Activated CD4-positive, alpha-beta memory T cell treated with anti-CD3 and anti-CD28 coated beads, Interleukin-2, amount 10 ng/mL, durations not matched to agents 7 days and 5 days (primary cell): ENCODE measurements at regions of chr12 and their contacts with region 1.

Region 1: DNA sequence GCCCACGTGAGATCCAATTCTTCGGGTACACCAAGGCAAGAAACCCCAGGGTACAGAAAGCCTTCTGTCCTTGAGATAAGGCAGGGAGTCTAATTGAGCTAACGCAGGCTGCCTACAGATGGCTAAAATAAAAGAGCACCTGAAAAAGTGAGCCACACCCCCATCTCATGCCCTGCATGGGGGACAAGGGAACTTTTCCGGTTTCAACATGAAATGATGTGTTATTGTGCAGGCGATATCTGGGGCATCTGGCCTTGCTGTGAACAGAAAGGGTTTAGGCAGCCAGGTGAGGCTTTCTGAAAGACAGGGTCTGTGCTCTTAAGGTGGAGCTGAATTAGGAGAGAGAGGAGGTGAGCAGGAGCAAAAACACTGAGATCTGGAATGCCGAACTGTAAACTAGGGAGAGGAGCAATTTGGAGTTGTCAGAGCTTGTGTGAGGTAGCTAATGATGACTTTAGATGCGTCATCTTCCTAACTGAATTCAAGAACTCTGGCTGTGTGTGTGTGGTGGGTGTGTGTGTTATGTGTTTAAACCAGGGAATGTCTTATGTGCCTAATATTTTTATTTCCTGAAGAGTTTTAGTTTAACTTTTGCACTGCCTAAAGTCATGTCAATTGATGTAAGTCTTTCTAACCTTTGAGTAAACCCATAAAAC is 20.1 kb upstream of the LDHB start:
- DNase-seq: no peak
- H3K4me3 Mint-ChIP-seq: no peak overlapping the region
- H3K27ac Mint-ChIP-seq: no peak overlapping the region
- H3K4me1 Mint-ChIP-seq: peaks cover 34% of the 10 kb centered on the region
- H3K27me3 Mint-ChIP-seq: no peaks in the 10 kb centered on the region

Region 2: DNA sequence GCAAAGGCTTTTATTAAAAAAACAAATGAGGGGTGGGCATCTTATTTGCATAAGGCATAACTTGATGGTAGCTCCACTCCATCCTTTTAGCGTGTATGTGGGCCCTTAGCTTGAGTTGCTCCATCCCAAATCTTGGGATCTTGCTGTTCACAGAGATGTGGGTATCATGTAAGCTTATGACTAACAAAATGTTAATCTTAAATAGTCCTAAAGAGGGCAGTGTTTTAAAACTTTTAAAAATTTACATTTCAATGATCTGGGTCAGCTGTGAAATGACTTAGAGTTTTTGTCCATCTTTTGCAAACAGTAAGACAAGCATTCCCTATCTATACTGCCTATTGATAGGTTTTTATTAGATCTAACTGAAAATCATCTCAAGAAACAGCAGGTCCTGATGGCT is 429.1 kb before region 1 on chr12:
- CTCF ChIA-PET with region 1: interaction called, 10 read pairs
- POLR2A ChIA-PET with region 1: no interaction called
- DNase-seq: no peak
- H3K4me3 Mint-ChIP-seq: no peak overlapping the region
- H3K27ac Mint-ChIP-seq: no peak overlapping the region
- H3K4me1 Mint-ChIP-seq: no peaks in the 10 kb centered on the region
- H3K27me3 Mint-ChIP-seq: no peaks in the 10 kb centered on the region

Region 3: GRCh38 chr12:21308785-21309184 is 369.0 kb before region 1 on chr12:
- CTCF ChIA-PET with region 1: interaction called, 10 read pairs
- POLR2A ChIA-PET with region 1: no interaction called
- DNase-seq: no peak
- H3K4me3 Mint-ChIP-seq: no peak overlapping the region
- H3K27ac Mint-ChIP-seq: no peak overlapping the region
- H3K4me1 Mint-ChIP-seq: no peaks in the 10 kb centered on the region
- H3K27me3 Mint-ChIP-seq: peaks cover 10% of the 10 kb centered on the region

Region 4: DNA sequence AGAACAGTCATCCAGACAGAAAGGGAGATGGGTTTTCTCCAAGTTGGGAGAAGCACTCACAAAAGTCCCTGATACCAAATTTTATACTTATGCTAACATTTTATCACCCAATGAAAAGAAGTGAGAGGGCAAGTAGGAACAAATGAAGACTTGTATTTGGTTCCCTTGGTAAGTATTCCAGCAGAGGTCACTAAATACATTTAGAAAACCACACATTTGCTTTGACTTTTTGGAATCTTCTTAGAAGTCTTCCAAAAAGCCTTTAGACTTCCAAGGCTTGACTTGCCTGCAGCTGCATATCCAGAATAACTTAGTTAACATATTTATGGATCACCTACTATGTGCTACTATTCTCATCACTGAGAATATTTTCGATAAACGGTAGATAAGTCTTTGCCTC is 70.0 kb before region 1 on chr12:
- CTCF ChIA-PET with region 1: interaction called, 30 read pairs
- POLR2A ChIA-PET with region 1: interaction called, 3 read pairs
- DNase-seq: no peak
- H3K4me3 Mint-ChIP-seq: no peak overlapping the region
- H3K27ac Mint-ChIP-seq: no peak overlapping the region
- H3K4me1 Mint-ChIP-seq: no peaks in the 10 kb centered on the region
- H3K27me3 Mint-ChIP-seq: peaks cover 3% of the 10 kb centered on the region

Region 5: GRCh38 chr12:21642707-21643389 is 34.9 kb before region 1 on chr12:
- CTCF ChIA-PET with region 1: interaction called, 12 read pairs
- POLR2A ChIA-PET with region 1: no interaction called
- DNase-seq: no peak
- H3K4me3 Mint-ChIP-seq: no peak overlapping the region
- H3K27ac Mint-ChIP-seq: peak overlapping the region; percentile 20
- H3K4me1 Mint-ChIP-seq: peaks cover 62% of the 10 kb centered on the region
- H3K27me3 Mint-ChIP-seq: no peaks in the 10 kb centered on the region

Region 6: DNA sequence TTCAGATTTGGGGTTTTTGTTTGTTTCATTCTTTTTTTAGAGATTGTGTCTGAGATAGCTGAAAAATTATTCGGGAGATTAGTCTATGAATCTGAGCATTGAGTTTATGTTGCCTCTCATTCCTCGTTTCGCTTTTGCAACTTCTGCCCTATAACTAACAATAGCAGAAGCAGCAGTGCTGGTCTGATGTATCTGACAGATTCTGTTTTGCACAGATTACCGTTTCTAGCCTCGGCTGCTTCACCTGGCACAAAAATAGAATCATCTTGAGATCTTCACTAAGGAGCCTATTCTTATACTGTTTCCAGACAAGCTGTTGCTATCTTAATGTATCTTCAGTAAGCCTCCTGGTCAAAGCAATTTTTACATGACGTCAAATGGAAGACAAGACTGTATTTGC is 67.5 kb after region 1 on chr12:
- CTCF ChIA-PET with region 1: no interaction called
- POLR2A ChIA-PET with region 1: no interaction called
- DNase-seq: no peak
- H3K4me3 Mint-ChIP-seq: no peak overlapping the region
- H3K27ac Mint-ChIP-seq: no peak overlapping the region
- H3K4me1 Mint-ChIP-seq: no peaks in the 10 kb centered on the region
- H3K27me3 Mint-ChIP-seq: peaks cover 3% of the 10 kb centered on the region